Heart right ventricle (tissue), 16 donors: ENCODE measurements at regions of chr17 and their contacts with region 1.

Region 1: DNA sequence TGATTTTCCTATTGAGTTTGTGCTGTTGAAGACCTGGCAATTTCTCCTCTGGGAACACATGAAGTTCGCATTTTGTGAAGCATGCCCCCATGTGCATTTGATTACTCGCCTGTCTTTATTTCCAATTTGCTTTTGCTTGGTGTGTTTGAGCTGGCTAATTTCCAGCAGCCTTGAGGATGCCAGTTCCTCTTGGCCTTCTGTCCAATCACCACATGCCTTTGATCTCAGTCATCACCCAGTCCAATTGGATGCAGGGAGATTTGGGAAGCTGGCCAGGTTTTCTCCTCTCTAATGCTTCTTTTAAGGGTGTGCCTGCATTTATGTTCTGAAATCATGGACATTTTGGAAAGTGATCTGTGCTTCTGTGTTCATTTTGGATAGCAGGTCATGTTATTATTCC is 3.8 kb upstream of the TMEM100 start:
- DNase-seq: peak in 1 of 2 donors; percentile 70
- ATAC-seq: peak in 6 of 8 donors; percentile 32 to 67 (median 51)
- H3K4me3 ChIP-seq: no peak overlapping the region
- H3K27ac ChIP-seq: peak overlapping the region in 1 of 10 donors; percentile 35
- H3K4me1 ChIP-seq: peaks cover 5 to 61% (median 46%) of the 10 kb centered on the region in 9 donors
- H3K27me3 ChIP-seq: peaks cover 0 to 3% (median 0%) of the 10 kb centered on the region in 7 donors
- CTCF ChIP-seq: no peak

Region 2: DNA sequence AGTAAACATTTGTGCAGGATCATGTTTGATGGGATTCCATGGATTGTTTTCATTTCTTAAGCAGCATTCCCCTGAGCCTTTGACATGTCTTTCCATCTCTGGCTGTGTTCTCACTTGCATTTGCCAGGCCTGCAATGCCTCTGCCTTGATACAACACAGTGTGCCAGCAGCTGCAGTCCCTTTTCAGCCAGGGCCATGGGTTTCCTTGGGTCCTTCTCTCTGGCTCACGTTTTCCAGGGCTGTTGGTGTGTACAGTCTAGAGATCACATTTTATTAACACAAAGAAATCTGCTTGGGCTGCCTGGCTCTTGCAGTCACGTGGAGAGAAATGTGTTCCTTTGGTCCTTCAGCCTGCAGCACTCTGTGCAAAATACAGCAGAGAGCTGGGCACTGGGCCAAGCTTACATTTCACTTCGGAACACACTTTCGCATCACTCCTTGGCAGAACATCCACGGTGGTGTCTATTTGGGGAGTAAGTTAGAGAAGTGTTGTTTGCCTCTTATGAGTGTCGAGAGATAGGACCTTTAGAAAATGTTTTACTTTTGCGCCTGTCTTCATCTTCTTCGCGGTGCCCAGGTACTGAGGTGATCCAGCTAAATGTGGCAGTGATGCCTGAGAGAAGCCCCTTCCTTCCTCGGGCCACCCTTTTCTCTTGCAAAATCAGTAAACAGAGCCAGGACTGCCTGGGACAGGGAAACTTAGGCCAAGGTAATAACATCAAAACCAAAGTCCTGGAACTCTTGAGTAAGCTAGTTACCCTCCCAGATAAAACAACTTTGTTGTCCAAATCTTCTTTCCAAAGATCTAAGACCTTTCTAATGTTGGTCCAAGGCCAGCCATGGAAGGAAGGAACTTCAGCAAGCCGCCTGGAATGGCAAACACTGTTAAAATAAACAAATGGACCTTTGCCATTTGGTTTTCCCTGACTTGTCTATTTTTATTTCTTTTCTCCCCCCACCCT is 440.8 kb before region 1 on chr17:
- intact Hi-C with region 1: loop called in 1 of 10 experiments (anchors 10 kb)
- DNase-seq: peak; percentile 81 to 94
- ATAC-seq: peak; percentile 79 to 93 (median 91)
- H3K4me3 ChIP-seq: peak overlapping the region in 1 of 10 donors; percentile 6
- H3K27ac ChIP-seq: peak overlapping the region; percentile 54 to 94 (median 84)
- H3K4me1 ChIP-seq: peaks cover 19 to 96% (median 80%) of the 10 kb centered on the region in 9 donors
- H3K27me3 ChIP-seq: no peaks in the 10 kb centered on the region
- CTCF ChIP-seq: no peak

Region 3: DNA sequence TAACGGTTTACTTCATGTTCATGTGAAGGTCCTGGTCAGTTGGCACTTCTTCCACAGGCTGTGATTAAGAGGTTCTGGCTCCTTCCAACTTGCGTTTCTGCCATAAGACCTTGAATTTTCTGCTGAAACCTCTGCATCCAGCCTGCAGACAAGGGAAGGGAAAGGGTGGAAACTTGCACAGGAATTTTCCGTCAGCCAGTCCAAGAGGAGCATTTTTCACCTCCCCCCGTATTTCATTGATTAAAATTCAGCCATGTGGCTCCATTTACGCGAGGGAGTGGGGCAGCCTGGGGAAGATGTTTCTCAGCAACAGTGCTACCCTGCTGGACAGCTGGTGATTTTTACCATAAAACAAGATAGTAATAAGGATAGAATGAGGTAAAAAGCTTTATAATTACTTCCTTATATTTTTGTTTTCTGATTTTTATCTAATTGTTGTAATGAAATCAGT is 113.7 kb before region 1 on chr17:
- intact Hi-C with region 1: no loop called
- DNase-seq: no peak
- ATAC-seq: peak in 4 of 8 donors; percentile 20 to 64 (median 35)
- H3K4me3 ChIP-seq: no peak overlapping the region
- H3K27ac ChIP-seq: no peak overlapping the region
- H3K4me1 ChIP-seq: peaks cover 0 to 16% (median 5%) of the 10 kb centered on the region in 9 donors
- H3K27me3 ChIP-seq: peaks cover 0 to 13% (median 0%) of the 10 kb centered on the region in 7 donors
- CTCF ChIP-seq: no peak

Region 4: GRCh38 chr17:55673743-55674506 is 52.5 kb before region 1 on chr17:
- intact Hi-C with region 1: no loop called
- DNase-seq: no peak
- ATAC-seq: no peak
- H3K4me3 ChIP-seq: no peak overlapping the region
- H3K27ac ChIP-seq: peak overlapping the region in 1 of 10 donors; percentile 35
- H3K4me1 ChIP-seq: peaks cover 0 to 26% (median 0%) of the 10 kb centered on the region in 9 donors
- H3K27me3 ChIP-seq: peaks cover 0 to 15% (median 0%) of the 10 kb centered on the region in 7 donors
- CTCF ChIP-seq: no peak

Region 5: GRCh38 chr17:55763851-55764250 is 37.4 kb after region 1 on chr17:
- intact Hi-C with region 1: loop called in 2 of 10 experiments (anchors 5 kb)
- DNase-seq: no peak
- ATAC-seq: peak in 4 of 8 donors; percentile 19 to 86 (median 46)
- H3K4me3 ChIP-seq: no peak overlapping the region
- H3K27ac ChIP-seq: peak overlapping the region in 1 of 10 donors; percentile 13
- H3K4me1 ChIP-seq: peaks cover 0 to 32% (median 21%) of the 10 kb centered on the region in 9 donors
- H3K27me3 ChIP-seq: no peaks in the 10 kb centered on the region
- CTCF ChIP-seq: no peak